ENCODE measurements at regions of chr2 and their contacts with region 1.

Region 1: GRCh38 chr2:201546576-201546975 is 95.0 kb downstream of the STRADB start:
- DNase-seq: no peak
- H3K4me3 ChIP-seq: no peak overlapping the region
- H3K27ac ChIP-seq: no peak overlapping the region
- H3K4me1 ChIP-seq: no peaks in the 10 kb centered on the region
- H3K27me3 ChIP-seq: no peaks in the 10 kb centered on the region
- CTCF ChIP-seq: no peak

Region 2: DNA sequence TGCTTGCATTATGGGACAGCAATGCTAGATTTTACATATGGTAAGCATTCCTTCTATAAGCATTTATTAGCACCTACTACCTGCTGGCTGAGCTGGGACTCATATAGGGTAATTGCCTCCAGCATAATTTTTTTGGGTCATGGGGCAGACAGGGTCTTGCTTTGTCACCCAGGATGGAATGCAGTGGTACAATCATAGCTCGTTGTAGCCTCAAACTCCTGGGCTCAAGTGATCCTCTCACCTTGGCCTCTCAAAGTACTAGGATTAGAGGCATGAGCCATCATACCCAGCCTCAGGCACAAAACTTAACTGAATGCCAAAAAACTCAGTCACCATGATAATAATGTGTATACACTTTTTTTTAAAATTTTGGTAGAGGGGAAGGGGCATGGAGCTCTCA is 61.4 kb after region 1 on chr2:
- CTCF ChIA-PET with region 1: no interaction called
- POLR2A ChIA-PET with region 1: interaction called, 14 read pairs
- intact Hi-C with region 1: no loop called
- DNase-seq: peak in 1 of 2 experiments; percentile 59
- H3K4me3 ChIP-seq: no peak overlapping the region
- H3K27ac ChIP-seq: no peak overlapping the region
- H3K4me1 ChIP-seq: peaks cover 12% of the 10 kb centered on the region; the same call in 1 of the 2 replicates
- H3K27me3 ChIP-seq: no peaks in the 10 kb centered on the region
- CTCF ChIP-seq: no peak

Region 3: DNA sequence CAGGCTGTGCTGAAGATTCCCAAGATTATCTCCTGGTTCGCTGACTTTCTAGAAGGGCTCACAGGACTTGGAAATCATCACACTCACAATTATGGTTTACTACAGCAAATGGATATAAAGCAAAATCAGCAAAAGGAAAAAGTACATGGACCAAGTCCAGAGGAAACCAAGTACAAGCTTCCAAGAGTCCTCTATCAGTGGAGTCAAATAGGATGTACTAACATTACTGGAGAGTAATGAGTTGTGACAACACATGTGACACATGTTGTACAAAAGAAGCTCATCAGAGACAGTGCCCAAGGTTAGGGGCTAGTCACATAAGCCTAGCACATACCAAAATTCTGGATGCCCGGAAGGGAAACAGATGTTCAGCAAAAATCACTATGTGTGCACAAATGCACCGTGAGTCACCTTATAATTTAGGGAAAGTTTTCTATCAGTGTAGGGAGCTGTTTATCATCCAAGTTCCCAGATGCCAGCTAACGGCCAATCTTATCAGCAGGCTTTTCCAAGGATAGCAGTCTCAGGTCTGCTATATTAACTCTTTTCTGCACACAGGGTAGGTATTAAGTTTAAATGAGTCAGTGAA is 87.2 kb after region 1 on chr2:
- CTCF ChIA-PET with region 1: no interaction called
- POLR2A ChIA-PET with region 1: no interaction called
- intact Hi-C with region 1: no loop called
- DNase-seq: no peak
- H3K4me3 ChIP-seq: no peak overlapping the region
- H3K27ac ChIP-seq: no peak overlapping the region
- H3K4me1 ChIP-seq: no peaks in the 10 kb centered on the region
- H3K27me3 ChIP-seq: no peaks in the 10 kb centered on the region
- CTCF ChIP-seq: no peak

Measured in PC-9 (cell line).